Ovary (tissue), 10 donors: ENCODE measurements at regions of chr22 and their contacts with region 1.

Region 1: DNA sequence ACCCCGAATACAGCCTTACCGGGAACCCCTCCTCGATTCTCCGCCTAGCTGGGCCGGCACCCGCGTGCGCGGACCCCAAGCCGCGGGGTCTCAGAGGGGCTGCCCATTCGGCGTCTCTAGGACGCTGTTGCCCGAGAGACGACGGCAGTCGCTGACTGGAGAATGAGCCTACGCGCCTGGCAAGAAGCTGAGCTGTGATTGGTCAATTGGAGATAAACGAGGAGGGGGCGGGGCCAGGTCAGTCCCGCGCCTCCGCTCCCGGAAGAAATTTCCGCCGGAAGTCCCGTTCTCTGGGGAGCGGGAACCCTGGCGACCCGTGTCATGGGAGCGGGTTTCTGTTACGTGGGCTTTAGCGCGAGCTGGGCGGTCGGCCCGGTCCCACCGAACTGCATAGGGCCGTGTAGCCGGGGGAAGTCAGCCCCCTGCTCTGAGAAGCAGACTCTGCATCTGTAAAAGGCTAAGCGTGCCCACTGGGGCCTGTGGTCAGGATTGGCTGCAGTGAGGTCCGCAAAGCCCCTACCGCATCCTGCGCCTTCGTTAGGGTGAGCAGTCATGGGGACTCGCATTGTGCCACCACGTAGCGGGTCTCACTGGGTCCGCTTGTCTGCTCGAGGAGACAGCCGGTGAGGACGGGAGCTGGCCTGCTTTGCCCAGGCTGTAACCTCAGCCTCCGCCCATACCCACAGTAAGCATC is at the start of gene EFCAB6:
- DNase-seq: peak; percentile 91 to 95 (median 94)
- H3K4me3 ChIP-seq: peak within 1 kb of the TSS; percentile 61
- H3K27ac ChIP-seq: peak within 1 kb of the TSS in 1 of 2 donors; percentile 66
- H3K4me1 ChIP-seq: peaks cover 6% of the 10 kb centered on the region
- H3K27me3 ChIP-seq: no peaks in the 10 kb centered on the region
- CTCF ChIP-seq: no peak
- EP300 ChIP-seq: no peak
- POLR2A ChIP-seq: peak; percentile 63
- total RNA-seq, gene EFCAB6: 4.7 to 17.5 (median 7.2) TPM

Region 2: DNA sequence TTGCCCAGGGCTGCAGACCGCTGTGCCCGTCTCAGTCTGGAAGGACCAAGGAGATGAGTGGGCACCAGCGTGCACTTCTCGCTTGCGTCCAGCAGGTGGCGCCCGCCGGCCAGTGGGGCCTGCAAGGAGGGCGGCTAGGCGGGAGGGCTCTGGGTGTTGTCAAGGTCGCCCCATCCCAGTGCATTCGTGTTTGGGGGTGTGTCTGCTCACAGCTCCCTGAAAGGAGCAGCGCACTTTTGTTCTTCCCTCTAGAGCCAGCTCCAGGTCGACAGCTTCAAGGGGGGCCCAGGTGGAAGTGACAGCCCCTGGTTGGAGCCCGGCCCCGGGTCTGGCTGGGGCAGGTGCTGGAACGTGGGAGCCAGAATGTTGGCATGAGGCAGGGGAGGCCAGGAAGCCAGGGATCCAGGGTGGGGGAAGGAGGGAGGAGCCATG is 423.9 kb before region 1 on chr22:
- intact Hi-C with region 1: no loop called
- DNase-seq: peak; percentile 85 to 93 (median 91)
- H3K4me3 ChIP-seq: no peak overlapping the region
- H3K27ac ChIP-seq: no peak overlapping the region
- H3K4me1 ChIP-seq: peaks cover 4% of the 10 kb centered on the region
- H3K27me3 ChIP-seq: no peaks in the 10 kb centered on the region
- CTCF ChIP-seq: peak; percentile 90 to 97 (median 97)
- EP300 ChIP-seq: no peak
- POLR2A ChIP-seq: no peak

Region 3: DNA sequence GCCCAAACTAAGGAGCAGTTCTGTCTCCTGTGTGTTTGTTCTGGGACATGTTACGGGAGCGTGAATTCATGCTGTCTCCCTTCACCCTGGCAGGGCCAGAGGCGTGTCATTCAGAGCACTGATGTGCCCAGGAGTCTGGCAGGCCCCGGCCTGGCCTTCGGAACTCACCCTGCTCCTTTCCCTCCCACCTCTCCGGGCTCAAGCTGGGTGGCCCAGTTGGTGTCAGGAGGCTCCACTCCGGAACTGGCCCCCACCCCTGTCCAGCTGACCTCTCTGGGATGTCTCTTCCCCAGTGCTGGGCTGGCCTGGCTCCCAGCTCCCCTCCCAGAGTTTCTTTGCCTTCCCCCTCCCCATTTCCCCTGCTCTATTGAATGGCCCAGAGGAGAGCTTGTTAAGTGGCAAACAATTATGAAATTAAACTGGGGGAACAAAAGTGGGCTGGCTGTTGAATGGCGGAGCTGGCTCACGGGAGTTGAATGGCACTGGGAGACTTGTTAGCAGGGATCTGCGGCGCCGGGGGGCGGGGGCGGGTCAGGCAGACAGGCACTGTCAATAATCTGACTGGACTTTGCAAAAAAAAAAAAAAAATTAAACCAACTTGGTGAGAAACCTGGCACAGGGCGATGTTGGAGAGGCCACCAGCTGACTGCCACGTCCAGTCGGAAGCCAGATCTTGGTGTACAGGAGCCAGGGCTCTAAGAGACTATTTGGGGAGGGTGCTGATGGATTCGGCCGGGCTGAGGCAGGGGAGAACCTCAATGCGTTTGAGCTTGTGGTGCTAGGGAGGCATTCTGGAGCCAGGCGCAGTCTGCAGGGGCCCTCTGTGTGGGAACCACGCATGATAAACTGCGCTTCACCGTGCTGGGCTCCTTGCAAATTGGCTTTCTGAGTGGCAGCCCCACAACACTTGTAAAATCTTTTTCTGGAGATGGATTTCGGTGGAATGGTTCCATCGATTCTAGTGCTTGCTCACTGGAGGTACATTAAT is 399.2 kb before region 1 on chr22:
- intact Hi-C with region 1: loop called in 1 of 4 experiments (anchors 10 kb)
- DNase-seq: no peak
- H3K4me3 ChIP-seq: no peak overlapping the region
- H3K27ac ChIP-seq: no peak overlapping the region
- H3K4me1 ChIP-seq: no peaks in the 10 kb centered on the region
- H3K27me3 ChIP-seq: no peaks in the 10 kb centered on the region
- CTCF ChIP-seq: no peak
- EP300 ChIP-seq: no peak
- POLR2A ChIP-seq: no peak

Region 4: DNA sequence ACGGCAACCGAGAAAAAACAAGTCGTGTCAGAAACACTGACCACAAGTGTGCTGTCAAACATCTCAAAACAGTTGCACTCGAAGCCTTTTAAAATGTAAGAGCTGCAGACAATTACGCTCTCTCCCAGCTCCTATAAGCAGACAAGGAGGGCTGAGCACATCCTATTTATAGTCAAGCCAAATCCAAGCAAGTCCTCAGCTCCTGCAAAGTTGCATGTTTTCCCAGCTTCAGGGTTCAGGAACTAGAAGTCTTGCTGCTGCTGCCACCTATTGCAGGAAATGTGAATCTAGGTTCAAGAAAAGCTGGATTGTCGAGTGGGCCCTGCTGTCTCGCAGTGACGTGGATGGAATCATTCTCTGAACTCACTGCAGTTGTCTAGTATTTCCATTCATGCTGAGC is 15.7 kb before region 1 on chr22:
- intact Hi-C with region 1: no loop called
- DNase-seq: no peak
- H3K4me3 ChIP-seq: no peak overlapping the region
- H3K27ac ChIP-seq: no peak overlapping the region
- H3K4me1 ChIP-seq: no peaks in the 10 kb centered on the region
- H3K27me3 ChIP-seq: no peaks in the 10 kb centered on the region
- CTCF ChIP-seq: no peak
- EP300 ChIP-seq: no peak
- POLR2A ChIP-seq: no peak

Region 5: DNA sequence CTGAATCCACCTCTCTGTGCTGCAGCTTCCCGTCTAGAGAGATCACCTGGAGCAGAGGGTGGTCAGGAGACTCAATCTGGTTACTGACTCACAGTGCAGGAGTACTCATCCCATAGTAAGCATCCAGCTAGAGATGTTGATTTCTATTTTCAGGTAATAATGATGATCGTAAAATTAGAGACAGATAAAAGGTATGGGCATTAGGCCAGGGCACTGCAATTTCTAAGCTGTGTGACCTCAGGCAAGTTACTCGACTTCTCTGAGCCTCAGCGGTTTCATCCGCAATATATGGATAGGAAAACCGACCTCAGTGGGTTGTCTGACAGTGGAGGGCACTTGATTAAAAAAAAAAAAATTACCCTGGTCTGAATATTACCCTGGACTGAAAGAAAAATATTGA is 129.2 kb after region 1 on chr22:
- intact Hi-C with region 1: no loop called
- DNase-seq: no peak
- H3K4me3 ChIP-seq: no peak overlapping the region
- H3K27ac ChIP-seq: no peak overlapping the region
- H3K4me1 ChIP-seq: no peaks in the 10 kb centered on the region
- H3K27me3 ChIP-seq: no peaks in the 10 kb centered on the region
- CTCF ChIP-seq: no peak
- EP300 ChIP-seq: no peak
- POLR2A ChIP-seq: no peak